ENCODE measurements at regions of chr10 and their contacts with region 1.

Region 1: DNA sequence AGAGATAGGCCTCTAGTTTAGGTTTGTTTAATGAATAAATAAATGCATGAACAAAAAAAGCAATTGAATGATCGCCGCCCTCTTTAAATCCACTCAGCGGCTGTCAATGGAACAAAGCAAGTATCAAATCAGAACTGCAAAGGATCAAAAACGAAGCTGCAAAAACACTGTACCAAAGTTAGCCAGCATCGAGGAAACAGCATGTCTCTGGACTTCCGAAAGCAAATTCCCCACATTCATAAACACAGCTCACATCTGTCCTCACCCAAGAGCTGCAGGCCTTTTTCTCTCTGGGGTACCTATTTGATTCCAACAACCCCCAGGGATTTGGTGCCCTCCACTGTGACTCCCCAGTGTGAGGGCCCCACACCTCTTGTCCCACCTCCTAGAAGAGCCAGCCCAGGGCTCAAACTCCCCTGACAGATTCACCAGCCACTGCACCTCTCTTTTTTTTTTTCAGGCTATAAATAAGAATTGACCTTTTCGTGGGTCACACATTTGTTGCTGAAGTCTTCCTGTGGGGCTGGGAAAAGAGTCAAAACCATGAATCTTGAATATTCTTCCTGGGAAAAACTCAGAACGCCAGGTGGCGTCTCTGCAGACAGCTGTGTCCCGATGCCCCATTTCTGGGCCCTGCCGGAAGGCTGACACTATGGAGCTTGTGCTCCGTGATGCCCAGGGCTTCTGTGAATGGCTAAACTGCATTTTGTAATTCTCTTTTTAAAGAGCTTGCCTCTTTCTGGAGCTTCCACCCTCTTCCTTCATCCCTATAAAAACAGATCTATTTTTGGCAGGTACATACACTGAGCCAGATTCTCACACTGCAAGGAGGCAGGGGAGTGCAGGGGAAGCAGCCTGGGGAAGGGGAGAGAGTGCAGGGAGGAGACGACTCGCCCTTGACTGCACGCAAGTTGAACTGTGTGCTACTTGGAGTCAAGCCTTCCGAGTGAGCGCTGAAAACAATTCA is 51.7 kb downstream of the HSPA12A start:
- DNase-seq: peak; percentile 68

Region 2: GRCh38 chr10:116742367-116743265 is 52.0 kb after region 1 on chr10 and contains the start of gene HSPA12A:
- intact Hi-C with region 1: loop called (anchors 10 kb)
- DNase-seq: peak; percentile 91
- total RNA-seq, gene HSPA12A: 20.5 to 20.8 TPM

Region 3: GRCh38 chr10:117174439-117175214 is 484.0 kb after region 1 on chr10:
- intact Hi-C with region 1: loop called in 1 of 2 experiments (anchors 10 kb)
- DNase-seq: peak; percentile 85

Measured in posterior vena cava (tissue), 2 donors.